BJ (cell line): ENCODE measurements at regions of chr2 and their contacts with region 1.

Region 1: GRCh38 chr2:60756191-60757041 is at the start of gene PAPOLG:
- DNase-seq: peak; percentile 35
- H3K4me3 ChIP-seq: peak within 1 kb of the TSS; percentile 98
- H3K27me3 ChIP-seq: no peaks in the 10 kb centered on the region
- CTCF ChIP-seq: no peak
- polyA plus RNA-seq, gene PAPOLG: 5.8 and 9.5 TPM in 2 replicates

Region 2: GRCh38 chr2:60780721-60781120 is 24.3 kb after region 1 on chr2:
- CTCF ChIA-PET with region 1: no interaction called
- POLR2A ChIA-PET with region 1: no interaction called
- DNase-seq: no peak
- H3K4me3 ChIP-seq: no peak overlapping the region
- H3K27me3 ChIP-seq: no peaks in the 10 kb centered on the region
- CTCF ChIP-seq: no peak

Region 3: GRCh38 chr2:60934165-60934722 is 177.8 kb after region 1 on chr2:
- CTCF ChIA-PET with region 1: no interaction called
- POLR2A ChIA-PET with region 1: no interaction called
- DNase-seq: no peak
- H3K4me3 ChIP-seq: no peak overlapping the region
- H3K27me3 ChIP-seq: no peaks in the 10 kb centered on the region
- CTCF ChIP-seq: no peak

Region 4: GRCh38 chr2:61176755-61177726 is 420.6 kb after region 1 on chr2:
- CTCF ChIA-PET with region 1: no interaction called
- POLR2A ChIA-PET with region 1: interaction called, 15 read pairs
- DNase-seq: peak; percentile 47
- H3K4me3 ChIP-seq: peak overlapping the region; percentile 69
- H3K27me3 ChIP-seq: no peaks in the 10 kb centered on the region
- CTCF ChIP-seq: no peak